ENCODE measurements at regions of chr20 and their contacts with region 1.

Region 1: DNA sequence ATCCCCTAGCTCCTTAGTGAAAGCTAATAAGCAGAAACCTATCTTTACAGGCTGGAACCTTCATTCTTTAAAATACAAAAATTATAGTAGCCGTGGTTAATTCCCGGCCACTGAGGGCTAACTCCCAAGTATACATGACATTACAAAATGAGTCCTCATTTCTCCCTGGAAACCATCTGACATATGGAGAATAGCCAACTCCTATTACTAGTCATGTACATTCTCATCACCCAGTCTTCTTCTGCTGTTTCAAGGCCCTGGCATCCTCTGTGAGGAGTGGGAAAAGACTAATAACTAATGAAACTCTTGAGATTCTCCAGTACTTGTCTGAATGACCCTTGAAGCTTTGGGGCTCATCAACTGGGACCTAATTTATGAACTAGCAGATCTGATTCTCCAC is 30.2 kb downstream of the CSNK2A1 start:
- DNase-seq: no peak
- ATAC-seq: no peak
- H3K4me3 ChIP-seq: no peak overlapping the region
- H3K27ac ChIP-seq: no peak overlapping the region
- H3K4me1 ChIP-seq: 0 out of 2 replicates have a peak, but pooled peaks cover 6% of the 10 kb centered on the region
- H3K27me3 ChIP-seq: no peaks in the 10 kb centered on the region
- CTCF ChIP-seq: no peak

Region 2: GRCh38 chr20:483813-484644 is 29.4 kb before region 1 on chr20:
- CTCF ChIA-PET with region 1: interaction called, 18 read pairs
- POLR2A ChIA-PET with region 1: no interaction called
- in situ Hi-C with region 1: no loop called
- intact Hi-C with region 1: no loop called
- DNase-seq: no peak
- ATAC-seq: no peak
- H3K4me3 ChIP-seq: no peak overlapping the region
- H3K27ac ChIP-seq: no peak overlapping the region
- H3K4me1 ChIP-seq: no peaks in the 10 kb centered on the region
- H3K27me3 ChIP-seq: no peaks in the 10 kb centered on the region
- CTCF ChIP-seq: no peak

Region 3: GRCh38 chr20:528923-529604 is 15.6 kb after region 1 on chr20:
- CTCF ChIA-PET with region 1: no interaction called
- POLR2A ChIA-PET with region 1: interaction called, 13 read pairs
- in situ Hi-C with region 1: no loop called
- intact Hi-C with region 1: no loop called
- DNase-seq: peak; percentile 92
- ATAC-seq: peak; percentile 80
- H3K4me3 ChIP-seq: no peak overlapping the region
- H3K27ac ChIP-seq: peak overlapping the region; percentile 48; the same call in 1 of the 2 replicates
- H3K4me1 ChIP-seq: peaks cover 17% of the 10 kb centered on the region
- H3K27me3 ChIP-seq: no peaks in the 10 kb centered on the region
- CTCF ChIP-seq: no peak

Measured in Panc1 (cell line).